WTC11 (cell line): ENCODE measurements at regions of chr3 and their contacts with region 1.

Region 1: GRCh38 chr3:128617557-128618397 is 32.8 kb downstream of the RPN1 start:
- DNase-seq: peak; percentile 98
- ATAC-seq: peak; percentile 91
- H3K4me3 Mint-ChIP-seq: peak overlapping the region; percentile 91
- H3K27ac Mint-ChIP-seq: peak overlapping the region; percentile 89
- H3K4me1 Mint-ChIP-seq: peaks cover 14% of the 10 kb centered on the region
- H3K27me3 Mint-ChIP-seq: no peaks in the 10 kb centered on the region
- CTCF ChIP-seq: peak; percentile 75; the same call in 1 of the 2 replicates

Region 2: GRCh38 chr3:128447561-128448013 is 170.2 kb before region 1 on chr3:
- CTCF ChIA-PET with region 1: no interaction called
- POLR2A ChIA-PET with region 1: no interaction called
- DNase-seq: no peak
- ATAC-seq: no peak
- H3K4me3 Mint-ChIP-seq: no peak overlapping the region
- H3K27ac Mint-ChIP-seq: no peak overlapping the region
- H3K4me1 Mint-ChIP-seq: no peaks in the 10 kb centered on the region
- H3K27me3 Mint-ChIP-seq: peaks cover 41% of the 10 kb centered on the region
- CTCF ChIP-seq: no peak

Region 3: DNA sequence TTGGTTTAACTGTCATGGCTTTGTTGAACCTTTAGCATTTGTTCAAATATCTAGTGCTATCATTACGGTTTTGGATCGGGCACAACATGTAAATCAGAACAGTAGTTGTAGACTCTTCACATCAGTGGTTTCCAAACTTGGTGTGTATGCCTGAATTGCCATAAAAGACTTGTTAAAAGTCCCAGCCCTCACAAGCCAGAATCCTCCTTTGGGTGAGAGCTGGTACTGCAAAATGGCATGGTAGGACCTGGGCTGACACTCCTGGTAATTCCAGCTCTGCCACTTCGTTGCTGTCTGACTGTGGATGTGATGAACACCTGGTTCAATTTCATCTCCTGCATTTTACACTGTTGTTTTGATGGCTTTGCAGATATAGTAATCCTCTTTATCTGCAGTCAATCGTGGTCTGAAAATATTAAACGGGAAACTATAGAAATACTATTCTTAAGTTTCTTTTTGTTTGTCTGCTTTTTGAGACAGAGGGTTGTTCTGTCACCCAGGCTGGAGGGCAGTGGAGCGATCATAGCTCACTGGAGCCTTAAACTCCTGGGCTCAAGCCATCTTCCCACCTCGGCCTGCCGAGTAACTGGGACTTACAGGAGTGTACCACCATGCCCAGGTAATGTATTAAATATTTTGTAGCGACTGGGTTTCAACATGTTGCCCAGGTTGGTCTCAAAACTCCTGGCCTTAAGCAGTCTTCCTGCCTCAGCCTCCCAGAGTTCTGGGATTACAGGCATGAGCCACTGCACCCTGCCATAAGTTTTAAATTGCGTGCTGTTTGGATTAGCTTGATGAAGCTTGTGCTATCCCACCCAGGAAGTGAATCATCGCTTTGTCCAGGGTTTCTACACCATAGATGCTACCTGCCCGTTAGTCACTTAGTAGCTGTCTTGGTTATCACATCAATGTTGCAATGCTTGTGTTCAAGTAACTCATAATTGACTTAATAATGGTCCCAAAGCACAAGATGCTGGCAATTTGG is 169.8 kb after region 1 on chr3:
- CTCF ChIA-PET with region 1: interaction called, 12 read pairs
- POLR2A ChIA-PET with region 1: no interaction called
- DNase-seq: peak; percentile 50
- ATAC-seq: peak; percentile 70
- H3K4me3 Mint-ChIP-seq: no peak overlapping the region
- H3K27ac Mint-ChIP-seq: no peak overlapping the region; the same call in 1 of the 2 replicates
- H3K4me1 Mint-ChIP-seq: peaks cover 56% of the 10 kb centered on the region
- H3K27me3 Mint-ChIP-seq: no peaks in the 10 kb centered on the region
- CTCF ChIP-seq: peak; percentile 58

Region 4: DNA sequence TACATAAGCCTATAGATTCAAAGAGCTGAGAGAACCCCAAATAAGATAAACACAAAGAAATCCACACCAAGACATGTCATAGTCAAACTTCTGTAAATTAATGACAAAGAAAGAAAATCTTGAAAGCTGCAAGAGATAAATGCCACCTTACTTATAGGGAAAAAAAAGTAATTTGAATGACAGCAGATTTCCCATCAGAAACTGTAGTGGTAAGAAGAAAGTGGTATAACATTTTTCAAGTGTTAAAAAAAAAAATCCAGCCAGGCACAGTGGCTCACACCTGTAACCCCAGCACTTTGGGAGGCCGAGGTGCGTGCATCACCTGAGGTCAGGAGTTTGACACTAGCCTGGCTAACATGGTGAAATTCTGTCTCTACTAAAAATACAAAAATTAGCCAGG is 338.7 kb after region 1 on chr3:
- CTCF ChIA-PET with region 1: no interaction called
- POLR2A ChIA-PET with region 1: no interaction called
- DNase-seq: no peak
- ATAC-seq: no peak
- H3K4me3 Mint-ChIP-seq: no peak overlapping the region
- H3K27ac Mint-ChIP-seq: no peak overlapping the region
- H3K4me1 Mint-ChIP-seq: no peaks in the 10 kb centered on the region
- H3K27me3 Mint-ChIP-seq: peaks cover 21% of the 10 kb centered on the region
- CTCF ChIP-seq: no peak